MCF 10A (cell line): ENCODE measurements at regions of chr2 and their contacts with region 1.

Region 1: GRCh38 chr2:59301466-59302402 is 1060.6 kb upstream of the FANCL start:
- DNase-seq: peak; percentile 80
- H3K4me3 Mint-ChIP-seq: no peak overlapping the region
- H3K27ac Mint-ChIP-seq: no peak overlapping the region
- H3K4me1 Mint-ChIP-seq: no peaks in the 10 kb centered on the region
- H3K27me3 Mint-ChIP-seq: no peaks in the 10 kb centered on the region
- CTCF ChIP-seq: peak; percentile 66

Region 2: DNA sequence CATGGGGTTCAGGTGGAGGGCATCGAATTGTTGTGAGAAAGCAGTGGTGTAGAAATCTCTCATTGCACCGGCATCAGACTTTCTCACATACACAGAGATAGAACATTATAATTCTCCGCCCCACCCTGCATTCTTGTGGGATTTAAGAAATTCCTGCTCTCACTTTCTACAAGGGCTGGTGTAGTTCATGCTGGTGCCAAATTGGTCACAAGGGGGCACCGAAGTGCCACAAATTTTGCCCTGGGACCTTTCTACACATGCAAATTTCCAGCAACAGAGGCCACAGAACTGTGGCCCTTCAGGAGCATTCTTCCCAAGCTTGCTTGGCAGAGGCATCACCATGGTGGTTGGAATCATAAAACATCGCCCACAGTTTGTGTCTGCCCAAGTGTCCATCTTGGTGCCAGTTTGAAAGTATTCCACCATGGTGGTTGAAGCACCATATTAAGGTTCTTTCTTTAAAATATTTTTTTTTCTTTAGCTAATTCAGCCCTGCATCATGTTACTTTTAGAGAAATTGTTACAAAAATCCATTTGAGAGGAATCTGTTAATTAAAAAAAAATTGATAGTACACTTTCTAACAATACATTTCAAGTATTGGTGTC is 539.5 kb before region 1 on chr2:
- CTCF ChIA-PET with region 1: interaction called, 6 read pairs
- POLR2A ChIA-PET with region 1: no interaction called
- intact Hi-C with region 1: loop called (anchors 1 kb)
- DNase-seq: peak; percentile 81
- H3K4me3 Mint-ChIP-seq: no peak overlapping the region
- H3K27ac Mint-ChIP-seq: no peak overlapping the region
- H3K4me1 Mint-ChIP-seq: peaks cover 6% of the 10 kb centered on the region
- H3K27me3 Mint-ChIP-seq: no peaks in the 10 kb centered on the region
- CTCF ChIP-seq: peak; percentile 69

Region 3: DNA sequence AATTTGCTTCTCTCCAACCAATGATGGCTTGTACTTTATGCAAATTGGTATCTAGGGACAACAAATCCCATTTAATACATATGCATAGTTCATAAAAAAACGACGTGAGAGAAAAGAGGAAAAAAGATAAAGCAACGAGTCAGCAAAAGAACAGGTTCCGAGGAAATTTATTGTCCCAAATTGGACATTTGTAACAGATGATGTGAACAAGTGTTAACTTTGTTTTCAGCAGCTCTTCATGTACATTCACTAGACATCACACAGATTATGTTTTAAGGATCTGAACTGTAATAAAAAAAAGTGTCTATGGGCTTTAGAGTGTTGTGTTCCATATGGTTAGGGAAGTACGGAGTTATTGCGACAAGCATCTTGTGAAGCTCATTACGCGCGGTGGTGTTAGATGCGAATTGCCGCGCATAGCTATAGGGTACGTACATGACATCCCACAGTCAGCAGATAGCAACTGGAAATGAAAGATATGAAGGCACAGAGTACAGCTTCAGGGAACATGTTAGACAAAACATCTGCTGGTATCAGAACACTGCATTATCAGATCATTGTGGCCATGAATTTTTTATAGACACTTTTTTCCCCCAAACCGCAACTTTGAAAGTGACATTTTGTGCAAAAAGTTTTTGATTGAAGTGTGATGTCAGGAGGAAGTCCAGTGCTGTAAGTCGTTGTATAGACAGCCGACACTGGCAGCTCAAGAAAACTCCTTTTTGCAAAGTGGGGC is 12.5 kb after region 1 on chr2:
- CTCF ChIA-PET with region 1: interaction called, 21 read pairs
- POLR2A ChIA-PET with region 1: no interaction called
- intact Hi-C with region 1: no loop called
- DNase-seq: no peak
- H3K4me3 Mint-ChIP-seq: no peak overlapping the region
- H3K27ac Mint-ChIP-seq: no peak overlapping the region
- H3K4me1 Mint-ChIP-seq: no peaks in the 10 kb centered on the region
- H3K27me3 Mint-ChIP-seq: no peaks in the 10 kb centered on the region
- CTCF ChIP-seq: no peak

Region 4: DNA sequence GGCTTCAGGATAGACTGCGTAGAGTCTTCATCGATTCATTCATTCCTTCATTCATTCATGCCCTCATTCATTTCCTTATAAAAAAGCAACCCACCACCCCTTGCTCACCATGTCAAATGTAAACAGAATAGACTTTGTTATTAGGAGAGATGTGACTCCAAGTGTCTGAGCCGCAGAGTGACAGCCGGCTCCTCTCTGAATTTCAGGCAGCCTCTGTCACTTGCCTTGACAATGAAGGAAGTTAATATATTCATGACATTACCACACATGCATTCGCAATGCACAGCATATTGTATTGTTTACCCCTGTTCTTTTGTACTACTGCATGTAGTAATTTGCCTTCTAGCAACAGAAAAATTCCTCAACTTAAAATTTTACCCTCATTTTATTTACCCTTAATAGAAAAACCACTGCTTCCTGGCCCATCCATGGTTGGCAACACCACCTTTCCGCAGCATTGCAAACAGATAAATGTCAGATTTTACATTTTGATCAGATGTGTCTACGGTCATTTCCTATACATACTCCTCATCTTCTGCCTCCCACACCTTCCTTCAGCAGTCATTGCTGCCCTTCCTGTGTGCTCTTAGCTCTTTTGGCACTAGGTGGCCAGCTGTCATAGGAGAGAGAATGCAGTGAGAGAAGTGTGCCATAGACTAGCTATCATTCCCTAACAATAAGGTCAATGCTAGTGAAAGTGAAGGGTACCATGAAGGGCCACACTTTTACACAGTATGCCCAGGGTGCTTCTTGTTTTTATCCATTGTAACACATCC is 160.9 kb after region 1 on chr2:
- CTCF ChIA-PET with region 1: no interaction called
- POLR2A ChIA-PET with region 1: no interaction called
- intact Hi-C with region 1: no loop called
- DNase-seq: peak; percentile 19
- H3K4me3 Mint-ChIP-seq: no peak overlapping the region
- H3K27ac Mint-ChIP-seq: no peak overlapping the region
- H3K4me1 Mint-ChIP-seq: no peaks in the 10 kb centered on the region
- H3K27me3 Mint-ChIP-seq: no peaks in the 10 kb centered on the region
- CTCF ChIP-seq: peak; percentile 11

Region 5: DNA sequence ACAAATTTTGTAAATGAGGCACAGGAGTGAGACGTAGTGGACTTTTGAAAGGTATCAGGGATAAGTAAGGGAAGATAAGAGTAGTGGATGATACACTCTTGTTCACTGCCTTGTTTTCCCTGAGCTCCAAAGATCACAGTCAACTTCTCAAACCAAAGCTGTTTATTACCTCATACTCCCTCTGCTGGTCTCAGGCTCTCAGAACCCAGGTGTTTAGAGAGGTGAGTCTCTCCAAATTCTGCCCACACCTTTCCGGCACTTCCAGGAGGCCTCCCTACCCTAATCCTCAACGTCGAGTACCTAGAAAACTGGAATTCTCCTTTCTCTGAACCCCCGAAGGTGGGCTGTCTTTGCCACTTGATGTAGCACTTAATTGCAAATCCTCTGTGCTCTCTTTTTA is 630.6 kb after region 1 on chr2:
- CTCF ChIA-PET with region 1: interaction called, 4 read pairs
- POLR2A ChIA-PET with region 1: no interaction called
- intact Hi-C with region 1: loop called (anchors 10 kb)
- DNase-seq: peak; percentile 31
- H3K4me3 Mint-ChIP-seq: no peak overlapping the region
- H3K27ac Mint-ChIP-seq: no peak overlapping the region
- H3K4me1 Mint-ChIP-seq: no peaks in the 10 kb centered on the region
- H3K27me3 Mint-ChIP-seq: no peaks in the 10 kb centered on the region
- CTCF ChIP-seq: no peak

Region 6: DNA sequence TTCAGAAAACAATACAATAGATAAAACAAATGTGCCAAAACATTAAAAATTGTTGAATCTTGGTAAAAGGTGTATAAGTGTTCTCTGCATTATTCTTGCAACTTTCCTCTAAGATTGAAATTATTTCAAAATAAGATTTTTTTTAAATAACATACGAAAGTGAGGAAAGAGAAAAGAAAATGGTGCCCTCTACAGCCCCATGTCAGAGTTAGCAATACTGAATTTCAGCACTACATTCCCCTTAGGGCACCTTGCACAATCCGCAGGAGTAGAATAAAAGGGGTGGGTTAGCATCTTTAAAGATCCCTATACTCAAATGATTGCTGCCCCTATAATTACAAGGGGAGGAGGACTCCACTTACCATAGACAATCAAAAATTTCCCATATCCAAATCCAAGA is 818.1 kb after region 1 on chr2:
- CTCF ChIA-PET with region 1: interaction called, 3 read pairs
- POLR2A ChIA-PET with region 1: no interaction called
- intact Hi-C with region 1: loop called (anchors 10 kb)
- DNase-seq: peak; percentile 40
- H3K4me3 Mint-ChIP-seq: no peak overlapping the region
- H3K27ac Mint-ChIP-seq: no peak overlapping the region
- H3K4me1 Mint-ChIP-seq: peaks cover 6% of the 10 kb centered on the region
- H3K27me3 Mint-ChIP-seq: no peaks in the 10 kb centered on the region
- CTCF ChIP-seq: peak; percentile 8

Region 7: DNA sequence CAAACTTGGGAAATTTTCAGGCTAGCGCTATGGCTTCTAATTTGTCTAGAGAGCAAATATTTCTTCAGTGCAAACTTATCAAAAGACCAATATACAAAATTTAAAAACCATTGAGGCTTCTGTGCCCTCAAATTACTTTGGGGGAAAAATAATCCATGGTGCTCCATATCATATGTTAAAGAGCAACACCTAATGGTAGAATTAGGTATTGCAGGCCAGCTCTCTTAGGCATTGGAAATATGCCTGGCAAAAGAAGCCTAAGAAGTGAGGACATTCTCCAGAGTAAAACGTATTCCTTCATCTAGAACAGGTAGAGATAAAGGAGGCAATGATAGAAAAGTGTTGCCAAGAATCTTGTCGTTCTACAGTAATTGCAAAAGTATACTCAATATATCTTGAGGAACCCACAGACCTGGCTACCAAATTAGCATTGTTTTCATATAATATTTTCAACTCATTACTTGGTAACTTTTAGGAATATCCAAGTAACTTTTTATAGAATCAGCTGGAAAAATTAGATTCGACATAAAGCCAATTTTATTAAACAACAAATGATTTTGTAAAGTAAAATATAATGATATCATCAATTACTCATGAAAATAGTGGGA is 850.6 kb after region 1 on chr2:
- CTCF ChIA-PET with region 1: no interaction called
- POLR2A ChIA-PET with region 1: no interaction called
- intact Hi-C with region 1: loop called (anchors 10 kb)
- DNase-seq: peak; percentile 43
- H3K4me3 Mint-ChIP-seq: no peak overlapping the region
- H3K27ac Mint-ChIP-seq: no peak overlapping the region
- H3K4me1 Mint-ChIP-seq: no peaks in the 10 kb centered on the region
- H3K27me3 Mint-ChIP-seq: no peaks in the 10 kb centered on the region
- CTCF ChIP-seq: peak; percentile 79